ENCODE measurements at regions of chr11 and their contacts with region 1.

Region 1: DNA sequence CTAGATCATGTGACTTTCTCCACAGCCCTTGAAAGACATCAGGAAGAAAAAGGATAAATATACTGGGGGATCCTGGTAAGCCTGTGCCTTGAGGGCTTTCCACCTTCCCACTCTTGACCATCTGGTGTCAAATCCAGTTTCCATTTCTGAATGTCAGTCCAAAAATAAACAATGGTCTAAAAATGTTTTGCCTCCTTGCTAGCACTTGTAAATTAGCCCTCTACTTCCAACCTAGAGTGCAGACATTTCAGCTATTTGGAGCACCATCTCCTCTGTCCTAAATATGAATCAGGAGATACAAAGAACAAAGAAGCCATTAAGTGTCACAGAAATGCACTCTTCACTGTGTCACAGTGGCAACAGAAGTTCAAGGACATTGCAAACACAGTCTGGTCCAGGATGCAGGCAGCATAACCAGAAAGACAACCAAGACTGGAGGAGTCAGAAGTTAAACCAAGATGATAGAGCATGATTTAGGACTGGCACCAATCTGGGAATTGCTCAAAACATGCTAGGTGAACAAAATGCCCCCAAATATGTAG is 88.1 kb downstream of the CCDC34 start:
- DNase-seq: no peak
- H3K4me3 ChIP-seq: no peak overlapping the region
- H3K27ac ChIP-seq: no peak overlapping the region
- H3K4me1 ChIP-seq: peaks cover 21% of the 10 kb centered on the region
- H3K27me3 ChIP-seq: no peaks in the 10 kb centered on the region
- CTCF ChIP-seq: no peak

Region 2: DNA sequence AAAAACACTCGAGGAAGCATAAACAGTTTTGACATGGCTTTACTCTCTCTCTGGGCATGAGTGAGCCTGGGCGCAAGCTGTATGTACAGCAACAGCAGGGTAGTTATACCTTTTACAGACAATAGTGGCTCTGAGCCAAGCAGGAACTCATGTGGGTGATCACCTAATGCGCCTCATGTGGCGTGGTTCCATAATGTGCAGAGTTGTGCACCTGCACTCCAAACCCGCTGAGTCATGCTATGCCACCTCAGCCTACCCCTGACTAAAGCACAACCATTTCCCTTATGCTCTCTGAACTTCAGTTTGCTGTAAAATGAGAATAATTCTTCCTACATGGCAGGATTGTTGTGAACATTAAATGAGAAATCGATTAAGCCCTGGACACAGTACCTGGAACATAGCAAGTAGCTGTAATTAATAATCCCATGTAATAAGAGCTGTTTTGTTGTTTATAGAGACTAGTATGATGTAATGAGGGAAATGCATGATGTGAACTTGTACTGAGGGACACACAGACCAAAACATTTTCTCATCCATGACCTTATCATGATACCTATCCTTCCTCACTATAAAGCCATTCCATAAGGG is 16.5 kb after region 1 on chr11:
- CTCF ChIA-PET with region 1: interaction called, 6 read pairs
- POLR2A ChIA-PET with region 1: interaction called, 17 read pairs
- intact Hi-C with region 1: no loop called
- DNase-seq: no peak
- H3K4me3 ChIP-seq: no peak overlapping the region
- H3K27ac ChIP-seq: no peak overlapping the region
- H3K4me1 ChIP-seq: peaks cover 18% of the 10 kb centered on the region
- H3K27me3 ChIP-seq: no peaks in the 10 kb centered on the region
- CTCF ChIP-seq: no peak

Measured in A673 (cell line).